Activated naive CD8-positive, alpha-beta T cell treated with anti-CD3 and anti-CD28 coated beads, Interleukin-2, amount 10 ng/mL, durations not matched to agents 7 days and 5 days (primary cell): ENCODE measurements at regions of chr19 and their contacts with region 1.

Region 1: DNA sequence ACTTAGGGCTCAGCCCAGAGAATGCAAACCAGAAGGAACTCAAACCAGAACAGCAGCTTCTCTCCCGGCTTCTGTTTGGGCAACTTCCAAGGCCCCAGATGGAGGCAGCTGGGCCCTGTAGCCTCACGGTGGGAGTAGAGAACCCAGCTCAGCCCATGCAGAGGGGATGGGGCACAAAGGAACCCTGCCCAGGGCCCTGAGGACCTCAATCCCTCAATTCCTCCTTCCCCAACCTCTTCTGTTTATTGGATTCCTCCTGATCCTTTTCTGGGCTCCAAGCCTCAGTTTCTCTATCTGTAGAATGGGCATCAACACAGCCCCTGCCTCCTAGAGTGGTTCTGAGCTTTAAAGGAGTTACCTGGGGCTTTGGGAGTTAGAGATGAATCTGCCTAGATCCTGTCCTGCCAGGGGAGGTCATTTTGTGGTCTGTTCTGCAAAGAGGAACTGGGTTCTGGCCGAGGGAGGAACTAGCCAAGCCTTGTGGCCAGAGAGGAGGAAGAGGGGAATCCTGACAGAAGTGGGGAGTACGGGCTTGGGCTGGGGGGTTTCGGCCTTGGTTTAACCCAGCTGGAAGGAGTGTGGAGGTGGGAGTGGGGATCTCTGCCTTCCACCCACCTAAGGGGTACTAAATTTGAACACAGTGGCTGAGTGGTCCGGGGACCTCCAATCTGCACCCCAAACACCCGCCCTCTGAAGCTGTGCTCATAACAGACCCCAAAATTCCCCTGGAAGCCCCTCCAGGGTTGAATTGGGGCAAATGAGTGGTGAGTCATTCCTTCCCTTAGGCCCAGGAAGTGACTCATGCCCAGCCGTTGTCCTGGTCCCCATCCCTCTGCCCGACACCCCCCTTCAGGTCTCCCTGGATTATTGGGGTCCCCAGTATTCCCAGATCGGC is 2.7 kb downstream of the ADGRE5 start:
- DNase-seq: peak; percentile 60
- ATAC-seq: peak; percentile 8
- H3K4me3 Mint-ChIP-seq: peak overlapping the region; percentile 98
- H3K27ac Mint-ChIP-seq: peak overlapping the region; percentile 95
- H3K4me1 Mint-ChIP-seq: peaks cover 30% of the 10 kb centered on the region
- H3K27me3 Mint-ChIP-seq: no peaks in the 10 kb centered on the region

Region 2: GRCh38 chr19:14318873-14319272 is 65.0 kb before region 1 on chr19:
- POLR2A ChIA-PET with region 1: no interaction called
- DNase-seq: no peak
- ATAC-seq: no peak
- H3K4me3 Mint-ChIP-seq: no peak overlapping the region
- H3K27ac Mint-ChIP-seq: no peak overlapping the region
- H3K4me1 Mint-ChIP-seq: no peaks in the 10 kb centered on the region
- H3K27me3 Mint-ChIP-seq: peaks cover 1% of the 10 kb centered on the region

Region 3: DNA sequence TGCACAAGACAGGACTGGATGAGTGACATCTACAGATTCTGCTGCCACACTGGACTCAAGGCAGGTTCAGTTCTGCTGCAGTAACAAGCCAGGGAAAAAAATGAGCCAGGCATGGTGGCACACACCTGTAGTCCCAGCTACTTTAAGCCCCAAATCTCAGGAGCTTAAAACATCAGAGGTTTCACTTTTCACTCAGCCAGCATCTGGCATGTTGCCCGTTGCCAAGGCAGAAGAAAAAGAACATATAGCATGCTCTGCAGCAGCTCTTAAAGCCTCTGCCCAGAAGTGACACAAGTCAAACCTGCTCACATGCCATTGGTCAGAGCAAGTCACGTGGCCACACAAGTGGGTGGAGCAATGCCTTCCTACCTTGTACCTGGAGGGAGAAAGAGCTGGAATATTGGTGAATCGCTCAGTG is 17.4 kb before region 1 on chr19:
- POLR2A ChIA-PET with region 1: interaction called, 747 read pairs
- DNase-seq: peak; percentile 83
- ATAC-seq: peak; percentile 54
- H3K4me3 Mint-ChIP-seq: peak overlapping the region; percentile 83
- H3K27ac Mint-ChIP-seq: peak overlapping the region; percentile 91
- H3K4me1 Mint-ChIP-seq: peaks cover 60% of the 10 kb centered on the region
- H3K27me3 Mint-ChIP-seq: no peaks in the 10 kb centered on the region

Region 4: GRCh38 chr19:14405758-14406644 is 22.1 kb after region 1 on chr19:
- POLR2A ChIA-PET with region 1: interaction called, 52 read pairs
- DNase-seq: peak; percentile 97
- ATAC-seq: peak; percentile 66
- H3K4me3 Mint-ChIP-seq: no peak overlapping the region
- H3K27ac Mint-ChIP-seq: peak overlapping the region; percentile 72
- H3K4me1 Mint-ChIP-seq: peaks cover 12% of the 10 kb centered on the region
- H3K27me3 Mint-ChIP-seq: no peaks in the 10 kb centered on the region

Region 5: GRCh38 chr19:14419106-14419813 is 35.4 kb after region 1 on chr19 and contains the start of gene DDX39A:
- POLR2A ChIA-PET with region 1: interaction called, 32 read pairs
- DNase-seq: peak; percentile 90
- ATAC-seq: peak; percentile 94
- H3K4me3 Mint-ChIP-seq: peak within 1 kb of the TSS; percentile 97
- H3K27ac Mint-ChIP-seq: peak within 1 kb of the TSS; percentile 99
- H3K4me1 Mint-ChIP-seq: peaks cover 30% of the 10 kb centered on the region
- H3K27me3 Mint-ChIP-seq: no peaks in the 10 kb centered on the region
- total RNA-seq, gene DDX39A: 192 to 202 TPM

Region 6: DNA sequence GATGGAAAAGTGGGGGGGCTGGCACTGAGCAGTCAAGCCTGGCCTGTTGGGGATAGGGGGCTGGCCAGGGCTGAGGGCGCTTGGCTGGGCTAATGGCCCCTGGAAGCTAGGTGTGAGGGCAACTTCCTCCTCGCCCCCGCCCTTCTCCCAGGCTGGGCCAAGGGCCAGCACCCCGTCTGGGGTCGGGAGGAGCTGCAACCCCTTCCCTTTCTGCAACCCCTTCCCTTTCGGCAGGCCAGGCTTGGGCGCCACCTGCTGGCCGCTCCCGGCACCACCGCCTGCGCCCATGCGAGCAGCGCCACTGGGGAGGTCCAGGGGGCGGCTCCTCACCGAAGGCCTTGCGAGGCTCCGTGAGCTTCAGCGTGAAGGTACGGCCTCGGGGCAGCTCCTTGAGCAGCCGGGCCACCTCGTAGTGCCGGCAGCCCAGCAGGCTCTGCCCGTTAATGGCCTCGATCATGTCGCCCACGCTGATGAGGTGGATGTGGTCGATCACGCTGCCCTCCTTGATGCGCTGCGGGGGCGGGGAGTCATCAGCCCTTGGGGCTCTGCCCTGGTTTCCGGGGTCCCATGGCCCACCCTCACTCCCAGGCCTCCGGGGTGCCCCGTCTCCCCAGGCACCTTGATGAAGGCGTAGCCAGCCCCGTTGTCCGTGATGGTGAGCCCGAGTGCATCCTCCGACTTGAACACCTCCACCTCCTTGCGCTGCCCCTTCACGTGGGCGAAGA is 96.2 kb after region 1 on chr19:
- POLR2A ChIA-PET with region 1: no interaction called
- DNase-seq: peak; percentile 88
- ATAC-seq: peak; percentile 53
- H3K4me3 Mint-ChIP-seq: no peak overlapping the region
- H3K27ac Mint-ChIP-seq: no peak overlapping the region
- H3K4me1 Mint-ChIP-seq: peaks cover 11% of the 10 kb centered on the region
- H3K27me3 Mint-ChIP-seq: no peaks in the 10 kb centered on the region

Region 7: DNA sequence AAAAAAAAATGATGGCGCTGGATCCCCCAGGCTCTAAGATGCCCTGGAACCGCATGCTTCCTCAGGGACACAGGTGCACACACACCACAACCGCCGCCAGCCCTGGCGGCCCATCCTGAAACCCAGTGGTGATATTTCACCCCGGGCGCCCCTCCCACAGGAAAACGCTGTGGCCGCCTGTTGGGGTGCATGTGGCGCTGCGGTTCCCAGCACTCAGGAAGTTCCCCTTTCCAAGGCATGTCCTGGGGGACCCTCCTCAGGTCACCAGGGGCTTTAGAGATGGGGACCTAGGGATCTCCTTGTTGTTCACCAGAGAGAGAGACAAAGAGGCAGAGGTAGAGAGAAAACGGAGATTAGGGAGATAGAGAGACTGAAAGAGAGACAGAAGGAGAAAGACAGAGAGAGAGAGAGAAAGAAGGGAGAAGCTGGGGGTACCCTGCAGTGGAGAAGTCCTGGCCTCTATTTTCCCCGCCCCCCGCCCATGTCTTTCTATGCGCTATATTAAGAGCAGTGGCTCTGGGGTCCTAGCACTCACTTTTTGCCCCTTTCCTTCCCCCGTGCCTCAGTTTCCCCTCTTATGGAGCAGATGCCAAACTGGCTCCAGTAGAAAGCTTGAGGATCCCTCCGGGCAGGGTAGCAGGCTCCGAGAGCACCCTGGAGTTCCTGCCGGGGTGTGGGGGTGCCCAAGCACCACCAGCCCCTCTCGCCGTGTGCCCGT is 392.1 kb after region 1 on chr19:
- POLR2A ChIA-PET with region 1: interaction called, 38 read pairs
- DNase-seq: no peak
- ATAC-seq: no peak
- H3K4me3 Mint-ChIP-seq: peak overlapping the region; percentile 12
- H3K27ac Mint-ChIP-seq: no peak overlapping the region
- H3K4me1 Mint-ChIP-seq: peaks cover 6% of the 10 kb centered on the region
- H3K27me3 Mint-ChIP-seq: peaks cover 32% of the 10 kb centered on the region